Ascending aorta (tissue), 2 donors: ENCODE measurements at regions of chr17 and their contacts with region 1.

Region 1: GRCh38 chr17:49227436-49228261 is 2.9 kb downstream of the PHOSPHO1 start:
- DNase-seq: peak in 1 of 2 donors; percentile 81
- H3K4me3 ChIP-seq: no peak overlapping the region
- H3K27ac ChIP-seq: no peak overlapping the region
- H3K4me1 ChIP-seq: peaks cover 0 to 9% of the 10 kb centered on the region in 2 donors
- H3K27me3 ChIP-seq: peaks cover 3% of the 10 kb centered on the region
- CTCF ChIP-seq: peak; percentile 70 to 81 (median 70)

Region 2: GRCh38 chr17:49035470-49036269 is 192.0 kb before region 1 on chr17:
- intact Hi-C with region 1: no loop called
- DNase-seq: no peak
- H3K4me3 ChIP-seq: peak overlapping the region in 1 of 2 donors; percentile 52
- H3K27ac ChIP-seq: no peak overlapping the region
- H3K4me1 ChIP-seq: no peaks in the 10 kb centered on the region
- H3K27me3 ChIP-seq: no peaks in the 10 kb centered on the region
- CTCF ChIP-seq: peak; percentile 73 to 83 (median 75)

Region 3: GRCh38 chr17:49180303-49180702 is 47.3 kb before region 1 on chr17:
- intact Hi-C with region 1: loop called (anchors 1 kb)
- DNase-seq: peak in 1 of 2 donors; percentile 72
- H3K4me3 ChIP-seq: no peak overlapping the region
- H3K27ac ChIP-seq: no peak overlapping the region
- H3K4me1 ChIP-seq: no peaks in the 10 kb centered on the region
- H3K27me3 ChIP-seq: no peaks in the 10 kb centered on the region
- CTCF ChIP-seq: peak; percentile 58 to 76 (median 69)

Region 4: DNA sequence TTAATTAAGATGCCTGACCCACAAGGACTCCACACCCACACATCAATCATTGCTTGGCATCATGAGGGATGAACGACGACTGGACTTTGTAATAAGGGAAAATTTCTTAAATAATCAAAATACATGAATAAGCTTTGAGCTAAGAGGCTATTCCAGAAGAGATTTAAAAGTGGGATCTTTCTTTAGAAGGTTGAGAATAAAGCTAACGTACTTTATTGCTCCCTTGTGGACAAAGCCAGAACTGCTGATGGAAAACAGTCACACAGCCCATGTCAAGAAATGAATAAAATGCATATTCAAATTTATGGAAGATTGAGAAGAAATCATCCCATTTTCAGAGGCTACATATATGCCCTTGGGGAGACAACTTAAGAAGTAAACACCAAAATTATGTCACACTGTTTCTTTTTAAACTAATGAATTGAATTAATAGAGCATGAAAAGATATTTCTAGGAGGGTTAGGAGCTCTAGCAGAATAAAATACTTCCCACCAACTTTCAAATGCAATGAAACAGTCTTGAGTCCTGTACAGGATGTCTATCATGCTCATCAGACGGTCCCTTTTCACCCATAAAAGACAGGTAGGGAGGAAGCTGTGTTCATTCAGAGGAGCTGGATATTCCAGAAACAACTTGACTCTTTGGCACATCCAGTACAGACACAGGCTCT is 63.2 kb after region 1 on chr17:
- intact Hi-C with region 1: loop called (anchors 2 kb)
- DNase-seq: no peak
- H3K4me3 ChIP-seq: no peak overlapping the region
- H3K27ac ChIP-seq: no peak overlapping the region
- H3K4me1 ChIP-seq: no peaks in the 10 kb centered on the region
- H3K27me3 ChIP-seq: no peaks in the 10 kb centered on the region
- CTCF ChIP-seq: peak; percentile 51 to 66 (median 57)